PC-9 (cell line): ENCODE measurements at regions of chr7 and their contacts with region 1.

Region 1: DNA sequence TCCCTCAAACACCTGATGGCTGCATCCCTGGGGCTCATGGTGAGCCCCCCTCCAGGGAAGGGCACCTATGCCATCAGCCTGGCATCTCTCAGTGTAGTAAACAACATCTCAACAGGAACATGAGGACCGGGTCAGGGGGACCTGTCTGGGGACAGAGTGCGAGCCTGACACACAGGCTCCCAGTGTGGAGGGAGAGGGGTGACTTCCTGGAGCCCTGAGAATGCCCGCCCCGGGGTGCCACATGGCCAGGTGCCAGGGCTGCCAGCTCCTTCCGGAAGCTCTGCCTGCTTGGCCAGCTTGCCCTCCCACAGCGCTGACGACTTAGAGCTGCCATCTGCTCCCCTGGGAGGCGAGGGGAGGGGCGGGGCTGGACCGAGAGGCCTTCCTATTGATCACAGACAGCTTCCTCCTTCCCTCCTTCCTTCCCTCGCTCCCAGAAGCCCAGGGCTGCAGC is 12.3 kb downstream of the STX1A start:
- DNase-seq: peak; percentile 95 to 99
- H3K4me3 ChIP-seq: peak overlapping the region; percentile 25; the same call in 1 of the 2 replicates
- H3K27ac ChIP-seq: peak overlapping the region; percentile 85
- H3K4me1 ChIP-seq: peaks cover 34% of the 10 kb centered on the region
- H3K27me3 ChIP-seq: no peaks in the 10 kb centered on the region
- CTCF ChIP-seq: no peak

Region 2: DNA sequence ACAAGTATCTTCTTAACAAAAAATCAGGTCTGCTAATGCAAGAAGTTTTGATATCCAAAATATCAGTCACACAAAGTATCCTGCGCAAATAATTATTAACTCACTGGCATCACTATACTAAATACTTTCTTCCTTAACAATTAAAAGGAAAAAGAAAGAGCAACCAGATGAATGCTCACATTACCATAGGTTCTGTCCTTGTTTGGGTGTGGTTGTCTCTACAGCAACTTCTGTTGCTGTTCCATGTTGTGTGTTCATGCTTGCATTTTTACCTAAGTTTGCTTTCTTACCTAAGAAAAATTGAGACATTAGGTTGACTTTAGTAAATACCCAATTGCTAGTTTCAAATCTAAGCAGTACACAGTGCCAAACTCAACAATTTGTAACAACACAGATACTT is 241.1 kb before region 1 on chr7:
- CTCF ChIA-PET with region 1: interaction called, 33 read pairs
- POLR2A ChIA-PET with region 1: no interaction called
- intact Hi-C with region 1: no loop called
- DNase-seq: no peak
- H3K4me3 ChIP-seq: no peak overlapping the region
- H3K27ac ChIP-seq: peak overlapping the region; percentile 54
- H3K4me1 ChIP-seq: no peaks in the 10 kb centered on the region
- H3K27me3 ChIP-seq: no peaks in the 10 kb centered on the region
- CTCF ChIP-seq: no peak

Region 3: GRCh38 chr7:73578342-73579127 is 128.6 kb before region 1 on chr7 and contains the start of gene TBL2:
- CTCF ChIA-PET with region 1: no interaction called
- POLR2A ChIA-PET with region 1: interaction called, 17 read pairs
- intact Hi-C with region 1: no loop called
- DNase-seq: peak; percentile 95 to 99
- H3K4me3 ChIP-seq: peak within 1 kb of the TSS; percentile 96
- H3K27ac ChIP-seq: peak within 1 kb of the TSS; percentile 73
- H3K4me1 ChIP-seq: peaks cover 16% of the 10 kb centered on the region
- H3K27me3 ChIP-seq: no peaks in the 10 kb centered on the region
- CTCF ChIP-seq: no peak
- total RNA-seq, gene TBL2: 43.9 and 49.2 TPM in 2 replicates

Region 4: DNA sequence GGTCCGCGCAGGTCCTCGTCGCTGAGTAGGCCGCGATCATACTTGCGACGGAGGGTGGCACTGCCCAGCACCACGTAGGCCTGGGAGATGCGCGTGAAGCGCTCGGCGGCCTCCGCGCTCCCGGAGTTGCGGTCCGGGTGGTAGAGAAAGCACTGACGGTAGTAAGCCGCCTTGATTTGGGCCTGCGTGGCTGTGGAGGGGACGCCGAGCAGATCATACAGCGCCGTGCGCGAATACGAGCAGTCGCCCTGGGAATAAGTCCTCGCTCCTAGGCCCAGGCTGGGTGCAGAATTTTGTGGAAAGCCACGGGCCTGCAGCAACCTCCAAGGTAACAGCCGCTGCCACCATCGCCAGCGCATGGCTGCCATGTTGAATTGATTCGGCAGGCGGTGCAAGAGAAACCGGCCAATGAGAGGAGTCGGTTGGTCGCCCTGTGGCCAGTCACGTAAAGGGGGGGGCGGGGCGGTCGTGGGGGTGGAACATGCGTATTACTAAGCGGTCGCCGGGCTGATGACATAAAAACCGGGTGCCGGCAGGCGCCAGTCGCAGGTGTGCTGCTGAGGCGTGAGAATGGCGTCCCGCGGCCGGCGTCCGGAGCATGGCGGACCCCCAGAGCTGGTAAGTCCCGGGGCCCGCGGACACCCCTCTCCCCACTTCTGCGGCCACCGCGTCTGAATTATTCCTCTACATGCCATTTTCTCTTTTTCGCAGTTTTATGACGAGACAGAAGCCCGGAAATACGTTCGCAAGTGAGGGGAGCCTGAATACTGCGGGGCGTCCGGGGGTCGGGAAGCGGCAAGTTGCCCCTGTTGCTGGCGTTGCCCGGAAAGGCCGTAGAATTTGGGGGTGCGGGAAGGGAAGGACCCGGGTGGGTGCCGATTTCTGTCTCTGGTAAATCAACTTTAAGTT is 23.9 kb before region 1 on chr7 and contains the starts of genes BUD23 and DNAJC30:
- CTCF ChIA-PET with region 1: no interaction called
- POLR2A ChIA-PET with region 1: no interaction called
- intact Hi-C with region 1: loop called (anchors 1 kb)
- DNase-seq: peak; percentile 85 to 92
- H3K4me3 ChIP-seq: peak within 1 kb of the TSS; percentile 97
- H3K27ac ChIP-seq: peak within 1 kb of the TSS; percentile 57
- H3K4me1 ChIP-seq: peaks cover 17% of the 10 kb centered on the region
- H3K27me3 ChIP-seq: no peaks in the 10 kb centered on the region
- CTCF ChIP-seq: no peak
- total RNA-seq, gene BUD23: 122 and 158 TPM in 2 replicates
- total RNA-seq, gene DNAJC30: 8.0 and 9.5 TPM in 2 replicates

Region 5: GRCh38 chr7:73769992-73770859 is 63.1 kb after region 1 on chr7 and contains the start of gene CLDN3:
- CTCF ChIA-PET with region 1: no interaction called
- POLR2A ChIA-PET with region 1: interaction called, 11 read pairs
- intact Hi-C with region 1: no loop called
- DNase-seq: peak; percentile 83 to 97
- H3K4me3 ChIP-seq: peak within 1 kb of the TSS; percentile 66; the same call in 1 of the 2 replicates
- H3K27ac ChIP-seq: peak within 1 kb of the TSS; percentile 58
- H3K4me1 ChIP-seq: peaks cover 23% of the 10 kb centered on the region
- H3K27me3 ChIP-seq: no peaks in the 10 kb centered on the region
- CTCF ChIP-seq: no peak
- total RNA-seq, gene CLDN3: 31.3 and 45.2 TPM in 2 replicates